GM12878 (cell line): ENCODE measurements at regions of chr2 and their contacts with region 1.

Region 1: GRCh38 chr2:150909090-150909489 is 352.6 kb downstream of the RBM43 start:
- DNase-seq: no peak
- ATAC-seq: peak; percentile 40
- H3K4me3 ChIP-seq: no peak overlapping the region
- H3K27ac ChIP-seq: no peak overlapping the region
- H3K4me1 ChIP-seq: no peaks in the 10 kb centered on the region; the same call in 1 of the 2 replicates
- H3K27me3 ChIP-seq: no peaks in the 10 kb centered on the region
- CTCF ChIP-seq: no peak
- EP300 ChIP-seq: no peak
- POLR2A ChIP-seq: no peak
- RAD21 ChIP-seq: no peak

Region 2: GRCh38 chr2:150895968-150896367 is 13.1 kb before region 1 on chr2:
- CTCF ChIA-PET with region 1: no interaction called
- POLR2A ChIA-PET with region 1: no interaction called
- RAD21 ChIA-PET with region 1: no interaction called
- SMC1A ChIA-PET with region 1: interaction called, 10 read pairs
- in situ Hi-C with region 1: no loop called
- intact Hi-C with region 1: no loop called
- DNase-seq: no peak
- ATAC-seq: no peak
- H3K4me3 ChIP-seq: no peak overlapping the region
- H3K27ac ChIP-seq: no peak overlapping the region
- H3K4me1 ChIP-seq: no peaks in the 10 kb centered on the region
- H3K27me3 ChIP-seq: no peaks in the 10 kb centered on the region
- CTCF ChIP-seq: no peak
- EP300 ChIP-seq: no peak
- POLR2A ChIP-seq: no peak
- RAD21 ChIP-seq: no peak